Posterior vena cava (tissue), 2 donors: ENCODE measurements at regions of chr1 and their contacts with region 1.

Region 1: DNA sequence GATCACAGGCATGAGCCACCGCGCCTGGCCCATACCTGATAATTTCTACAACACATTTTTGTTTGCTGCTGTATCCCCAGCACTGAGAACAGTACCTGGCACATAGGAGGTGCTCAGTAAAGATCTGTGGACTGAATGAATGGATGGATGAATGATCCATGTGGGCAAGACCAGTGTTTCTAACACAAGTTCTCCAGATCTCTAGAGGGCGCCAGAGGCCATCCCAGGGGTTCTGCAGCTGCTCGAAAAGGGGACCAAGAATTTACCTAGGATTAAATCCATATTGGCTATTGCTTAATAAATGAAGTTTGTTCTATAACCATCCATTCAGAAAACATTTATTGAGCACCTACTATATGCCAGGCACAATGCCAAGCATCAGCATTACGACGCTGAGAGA is 167.7 kb downstream of the ACTL8 start:
- DNase-seq: no peak

Region 2: DNA sequence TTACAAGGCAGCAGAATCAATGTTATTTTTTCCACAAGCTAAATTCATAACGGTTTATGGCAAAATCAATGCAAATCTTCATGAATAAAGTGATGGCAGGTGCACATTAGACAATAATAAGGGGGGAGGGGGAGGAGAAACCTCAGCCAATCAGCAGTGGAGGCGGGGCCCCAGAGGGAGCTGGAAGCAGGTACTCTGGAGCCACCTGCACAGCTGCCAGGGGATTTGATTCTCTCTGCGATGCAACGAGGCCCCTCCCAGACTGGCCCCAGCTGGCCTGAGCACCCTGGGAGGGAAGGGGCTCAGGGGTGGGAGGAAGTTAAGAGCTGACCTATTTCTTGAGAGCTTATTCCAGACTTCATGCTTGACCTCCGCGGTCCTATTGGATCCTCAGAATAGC is 57.0 kb after region 1 on chr1:
- intact Hi-C with region 1: no loop called
- DNase-seq: no peak

Region 3: GRCh38 chr1:18091660-18092446 is 169.0 kb after region 1 on chr1:
- intact Hi-C with region 1: loop called in 1 of 2 experiments (anchors 10 kb)
- DNase-seq: peak; percentile 85